SK-N-SH (cell line): ENCODE measurements at regions of chr2 and their contacts with region 1.

Region 1: DNA sequence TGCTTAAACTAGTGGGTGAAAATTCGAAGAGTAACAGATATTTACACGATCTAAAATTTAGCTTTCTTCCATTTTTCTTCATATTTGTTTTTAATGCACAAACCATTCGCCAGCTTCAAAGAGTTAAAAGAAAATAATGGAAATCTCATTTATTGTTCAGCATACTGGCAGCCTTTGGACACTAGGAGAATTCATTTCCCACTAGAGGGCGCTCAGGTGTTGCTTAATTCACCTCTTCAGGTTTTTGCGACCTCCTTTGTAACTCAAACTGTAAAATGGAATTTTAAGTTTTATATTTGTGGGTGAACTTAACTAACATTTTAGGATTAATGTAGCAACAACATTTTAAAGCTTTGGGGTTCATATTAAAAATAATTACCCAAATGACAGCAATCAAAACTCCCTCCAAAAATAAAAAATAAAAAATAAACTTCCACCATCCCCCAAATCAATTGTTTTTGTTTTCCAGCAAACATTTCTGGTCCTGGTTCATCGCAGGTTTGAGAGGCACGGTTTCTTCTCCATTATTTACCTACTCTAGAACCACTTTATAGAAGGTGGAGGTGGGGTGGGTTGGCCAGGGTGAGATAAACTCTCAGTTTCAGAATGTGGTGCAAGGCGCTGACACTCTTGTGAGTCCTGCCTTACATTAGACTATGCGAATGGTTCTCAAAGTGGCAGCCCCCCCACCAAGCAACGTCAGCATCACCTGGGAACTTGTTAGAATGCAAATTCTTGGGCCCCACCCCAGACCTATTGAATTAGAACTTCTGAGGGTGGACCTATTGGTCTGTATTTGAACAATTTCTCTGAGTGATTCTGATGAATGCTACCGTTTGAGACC is 24.7 kb upstream of the PNPT1 start:
- DNase-seq: peak; percentile 56
- H3K4me3 ChIP-seq: no peak overlapping the region; a peak in 1 of 4 replicates
- H3K27ac ChIP-seq: no peak overlapping the region
- H3K4me1 ChIP-seq: peaks cover 3% of the 10 kb centered on the region in 2 experiments; a peak in 2 of 4 replicates
- H3K27me3 ChIP-seq: no peaks in the 10 kb centered on the region
- CTCF ChIP-seq: peak; percentile 92
- EP300 ChIP-seq: no peak
- RAD21 ChIP-seq: peak; percentile 91

Region 2: DNA sequence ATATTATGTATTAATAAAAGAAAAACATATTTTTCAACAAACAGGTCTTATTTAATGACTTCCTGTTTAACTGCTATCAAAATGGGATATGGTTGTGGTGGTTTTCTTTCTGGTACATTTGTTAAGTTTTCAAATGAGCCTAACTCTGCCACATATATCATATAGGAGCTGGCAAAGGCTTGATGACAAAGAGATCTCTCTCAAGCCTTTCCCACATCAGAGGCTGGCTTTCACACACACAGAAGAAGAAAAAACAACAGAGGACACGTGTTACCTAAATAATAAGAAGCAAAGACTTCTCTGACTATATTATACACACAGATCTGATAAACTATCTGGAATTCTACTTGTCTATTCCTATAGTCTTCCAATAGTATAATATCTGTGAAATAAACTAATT is 152.8 kb before region 1 on chr2:
- CTCF ChIA-PET with region 1: no interaction called
- POLR2A ChIA-PET with region 1: no interaction called
- DNase-seq: no peak
- H3K4me3 ChIP-seq: no peak overlapping the region
- H3K27ac ChIP-seq: no peak overlapping the region
- H3K4me1 ChIP-seq: no peaks in the 10 kb centered on the region
- H3K27me3 ChIP-seq: no peaks in the 10 kb centered on the region
- CTCF ChIP-seq: no peak
- EP300 ChIP-seq: no peak
- RAD21 ChIP-seq: no peak

Region 3: DNA sequence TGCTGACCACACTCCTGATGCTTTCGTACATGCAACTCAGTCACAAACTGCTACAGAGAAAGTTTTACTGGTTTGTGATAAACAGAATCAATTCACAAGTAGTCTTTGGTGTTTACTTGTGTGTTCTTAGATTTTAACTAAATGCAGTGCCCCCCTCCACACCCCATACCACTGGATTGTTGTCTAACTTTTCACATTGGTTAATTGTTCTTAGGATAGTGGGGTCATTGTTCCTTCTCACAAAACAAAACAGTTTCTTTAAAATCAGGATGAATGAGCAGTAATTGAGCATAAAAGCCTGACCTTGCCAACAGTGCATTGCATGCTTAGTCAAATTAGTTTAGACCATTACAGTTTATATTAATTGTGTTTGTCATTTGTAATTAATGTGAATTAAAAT is 10.6 kb before region 1 on chr2:
- CTCF ChIA-PET with region 1: interaction called, 11 read pairs
- POLR2A ChIA-PET with region 1: no interaction called
- DNase-seq: no peak
- H3K4me3 ChIP-seq: no peak overlapping the region
- H3K27ac ChIP-seq: no peak overlapping the region
- H3K4me1 ChIP-seq: no peaks in the 10 kb centered on the region
- H3K27me3 ChIP-seq: no peaks in the 10 kb centered on the region
- CTCF ChIP-seq: no peak
- EP300 ChIP-seq: no peak
- RAD21 ChIP-seq: no peak

Region 4: DNA sequence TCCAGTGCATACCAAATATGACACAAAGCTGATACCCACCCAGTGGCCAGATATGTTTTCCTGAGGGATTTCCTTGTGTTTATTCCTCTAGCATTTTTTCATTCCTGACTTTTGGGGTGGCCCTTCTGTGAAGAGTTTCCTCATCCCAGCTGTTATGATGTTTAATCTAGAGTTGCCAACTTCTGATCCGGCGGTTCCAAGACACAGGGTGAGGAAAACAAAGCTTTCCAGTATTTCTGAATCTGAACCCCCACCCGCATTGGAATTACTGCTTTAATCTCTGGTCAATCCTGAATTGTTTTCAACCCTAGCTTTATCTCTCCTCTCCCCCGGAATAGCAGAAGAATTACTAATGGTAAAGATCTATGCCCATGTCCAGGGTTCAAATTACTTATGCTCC is 14.5 kb after region 1 on chr2:
- CTCF ChIA-PET with region 1: interaction called, 32 read pairs
- POLR2A ChIA-PET with region 1: no interaction called
- DNase-seq: no peak
- H3K4me3 ChIP-seq: no peak overlapping the region
- H3K27ac ChIP-seq: peak overlapping the region in 1 of 2 experiments; percentile 60; a peak in 1 of 4 replicates
- H3K4me1 ChIP-seq: peaks cover 0 to 6% of the 10 kb centered on the region in 2 experiments; a peak in 1 of 4 replicates
- H3K27me3 ChIP-seq: no peaks in the 10 kb centered on the region
- CTCF ChIP-seq: no peak
- EP300 ChIP-seq: no peak
- RAD21 ChIP-seq: no peak

Region 5: DNA sequence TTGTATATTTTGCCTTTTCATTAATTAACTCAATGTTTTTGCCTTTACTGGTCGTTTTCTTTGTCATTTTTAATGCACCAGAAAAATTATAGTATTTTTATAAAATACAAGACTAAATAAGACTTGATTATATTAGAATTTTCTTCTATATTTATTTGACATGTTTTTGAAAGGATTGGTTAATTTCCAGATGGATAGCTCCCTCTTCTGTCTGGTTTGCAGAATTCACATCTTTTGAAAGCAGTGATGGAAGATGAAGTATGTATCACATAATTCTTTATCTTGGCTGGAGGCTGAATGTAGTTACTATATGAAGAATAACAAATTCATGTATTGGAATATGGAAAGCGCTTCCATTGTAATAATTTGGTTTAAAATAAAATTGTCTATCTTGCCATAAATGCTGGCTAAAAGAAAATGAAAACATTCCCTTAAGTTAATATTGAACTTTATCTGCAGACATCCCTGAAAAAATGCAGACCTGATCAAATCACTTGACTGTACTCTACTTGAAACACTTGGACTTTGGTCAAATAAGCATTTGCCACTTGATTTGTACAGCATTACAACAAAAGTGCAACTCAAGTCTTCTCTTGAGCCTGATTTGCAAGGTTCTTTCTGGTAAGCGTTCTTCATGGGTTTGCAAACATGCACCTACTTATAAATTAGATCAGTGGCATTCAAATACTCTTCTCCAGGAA is 291.5 kb after region 1 on chr2:
- CTCF ChIA-PET with region 1: interaction called, 28 read pairs
- POLR2A ChIA-PET with region 1: no interaction called
- DNase-seq: peak; percentile 24
- H3K4me3 ChIP-seq: no peak overlapping the region
- H3K27ac ChIP-seq: peak overlapping the region in 1 of 2 experiments; percentile 44; a peak in 3 of 4 replicates
- H3K4me1 ChIP-seq: peaks cover 5 to 12% of the 10 kb centered on the region in 2 experiments; a peak in 3 of 4 replicates
- H3K27me3 ChIP-seq: no peaks in the 10 kb centered on the region
- CTCF ChIP-seq: peak; percentile 73
- EP300 ChIP-seq: no peak
- RAD21 ChIP-seq: peak; percentile 81